PC-3 (cell line): ENCODE measurements at regions of chr6 and their contacts with region 1.

Region 1: DNA sequence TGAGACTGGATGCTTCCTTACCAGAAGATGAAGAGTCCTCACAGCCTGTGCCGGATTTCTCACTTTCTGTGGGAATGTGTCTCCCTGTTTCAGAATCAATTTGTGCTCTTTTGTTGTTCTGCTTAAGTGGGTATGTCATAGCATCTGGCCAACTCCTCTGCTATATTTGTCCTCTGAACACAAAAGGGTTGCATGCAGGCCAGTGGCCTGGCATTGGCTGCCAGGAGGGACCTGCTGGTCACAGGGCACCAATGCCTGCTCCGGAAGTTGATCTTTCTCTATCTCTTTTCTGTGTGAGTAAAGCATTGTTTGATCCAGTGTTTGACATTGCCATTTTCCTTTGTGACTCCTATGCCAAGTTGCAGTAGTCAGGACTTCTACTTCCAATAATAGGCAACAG is 47.8 kb downstream of the JARID2 start:
- DNase-seq: no peak
- ATAC-seq: no peak
- H3K4me3 ChIP-seq: no peak overlapping the region
- H3K27ac ChIP-seq: no peak overlapping the region
- H3K4me1 ChIP-seq: peaks cover 21% of the 10 kb centered on the region
- H3K27me3 ChIP-seq: no peaks in the 10 kb centered on the region
- CTCF ChIP-seq: no peak

Region 2: GRCh38 chr6:15255481-15255880 is 38.2 kb before region 1 on chr6:
- CTCF ChIA-PET with region 1: no interaction called
- POLR2A ChIA-PET with region 1: no interaction called
- intact Hi-C with region 1: loop called (anchors 5 kb)
- DNase-seq: no peak
- ATAC-seq: no peak
- H3K4me3 ChIP-seq: no peak overlapping the region
- H3K27ac ChIP-seq: no peak overlapping the region
- H3K4me1 ChIP-seq: peaks cover 37% of the 10 kb centered on the region
- H3K27me3 ChIP-seq: no peaks in the 10 kb centered on the region
- CTCF ChIP-seq: no peak

Region 3: DNA sequence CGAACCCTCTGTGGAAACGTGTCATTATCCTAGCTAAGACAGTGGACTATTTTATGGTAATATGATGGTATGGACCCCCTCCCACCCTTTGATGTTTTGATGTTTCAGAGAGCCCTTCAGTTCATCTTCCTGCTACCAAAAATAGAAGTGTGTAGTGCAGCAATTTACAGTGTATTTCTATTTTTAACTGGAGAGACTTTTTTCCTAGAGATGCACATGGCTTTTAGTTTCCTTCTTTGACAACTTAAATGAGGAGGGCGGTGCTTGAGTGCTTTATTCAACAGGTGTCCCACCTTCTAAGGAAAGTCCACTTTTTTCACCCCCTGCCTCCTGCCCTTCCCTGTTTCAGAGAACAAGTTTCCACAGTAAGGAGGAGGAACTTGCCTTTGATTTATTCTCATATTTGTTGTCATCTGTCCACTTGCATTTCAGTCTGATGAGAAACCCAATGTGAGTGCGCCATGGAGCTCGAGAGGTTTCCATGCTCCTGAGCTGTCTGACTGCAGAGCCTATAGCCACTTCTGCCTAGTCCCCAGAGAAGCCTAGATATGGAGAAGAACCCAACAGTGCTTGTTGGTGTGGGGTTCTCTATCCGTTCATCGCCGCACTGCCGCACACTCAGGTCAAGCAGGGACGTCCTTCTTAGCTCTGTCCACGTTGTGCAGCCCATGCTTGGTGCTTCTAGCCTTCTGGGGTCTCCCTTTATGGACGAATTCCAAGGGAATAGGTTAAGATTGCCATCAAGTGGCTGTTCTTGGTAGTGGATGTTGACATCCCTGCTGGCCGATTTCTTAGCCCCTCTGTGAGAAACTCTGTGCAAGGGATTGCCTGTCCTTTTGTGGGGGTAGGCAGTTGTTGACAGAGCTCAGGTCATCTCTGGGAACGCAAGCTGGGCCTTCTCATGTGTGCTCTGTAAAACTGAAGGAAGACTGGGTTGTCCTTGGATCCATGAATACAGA is 96.4 kb after region 1 on chr6:
- CTCF ChIA-PET with region 1: no interaction called
- POLR2A ChIA-PET with region 1: no interaction called
- intact Hi-C with region 1: no loop called
- DNase-seq: peak; percentile 49
- ATAC-seq: peak; percentile 64
- H3K4me3 ChIP-seq: no peak overlapping the region
- H3K27ac ChIP-seq: no peak overlapping the region
- H3K4me1 ChIP-seq: no peaks in the 10 kb centered on the region; the same call in 1 of the 2 replicates
- H3K27me3 ChIP-seq: no peaks in the 10 kb centered on the region
- CTCF ChIP-seq: peak; percentile 86